Psoas muscle (tissue), 8 donors: ENCODE measurements at regions of chr19 and their contacts with region 1.

Region 1: DNA sequence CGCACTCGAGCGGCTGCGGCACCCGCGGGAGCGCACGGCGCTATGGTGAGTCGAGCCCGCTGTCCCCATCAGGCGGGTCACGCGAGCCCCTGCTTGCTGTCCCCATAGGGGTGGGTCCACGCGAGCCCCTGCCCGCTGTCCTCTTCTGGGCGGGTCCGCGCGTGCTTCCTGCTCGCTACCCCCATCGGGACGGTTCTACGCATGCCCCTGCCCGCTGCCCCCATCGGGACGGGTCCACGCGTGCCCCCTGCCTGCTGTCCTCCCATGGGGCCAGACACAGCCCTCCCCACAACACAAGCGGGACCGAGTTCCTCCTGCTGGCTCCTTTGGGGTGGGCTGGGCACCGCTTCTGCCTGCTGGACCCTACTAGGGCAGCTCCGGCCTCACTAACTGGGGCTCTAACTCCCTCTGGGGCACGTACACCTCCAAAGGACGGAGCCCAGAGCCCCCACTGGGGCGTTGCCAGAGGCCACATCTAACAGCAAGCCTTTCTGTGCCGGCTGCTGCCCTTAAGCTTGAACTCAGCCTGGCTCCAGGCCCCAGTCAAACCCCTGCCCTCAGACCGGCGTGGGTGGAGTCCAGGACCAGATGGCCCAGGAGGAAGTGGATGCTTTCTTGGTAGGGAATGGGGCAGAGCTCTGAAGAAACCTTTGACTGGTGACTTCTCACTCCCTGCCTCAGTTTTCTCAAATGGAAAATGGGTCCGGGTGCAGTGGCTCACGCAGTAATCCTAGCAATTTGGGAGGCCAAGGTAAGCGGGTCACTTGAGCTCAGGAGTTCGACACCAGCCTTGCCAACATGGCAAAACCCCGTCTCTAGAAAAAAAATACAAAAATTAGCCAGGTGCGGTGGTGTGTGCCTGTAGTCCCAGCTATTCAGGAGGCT is 722 bp downstream of the COLGALT1 start:
- DNase-seq: peak; percentile 77 to 80
- ATAC-seq: peak; percentile 22 to 35 (median 26)
- H3K4me3 ChIP-seq: peak overlapping the region; percentile 91
- H3K27ac ChIP-seq: peak overlapping the region; percentile 78
- H3K4me1 ChIP-seq: peaks cover 21% of the 10 kb centered on the region
- H3K27me3 ChIP-seq: no peaks in the 10 kb centered on the region
- CTCF ChIP-seq: no peak

Region 2: GRCh38 chr19:17511724-17512573 is 44.2 kb before region 1 on chr19:
- intact Hi-C with region 1: loop called (anchors 2 to 5 kb)
- DNase-seq: peak; percentile 90 to 96
- ATAC-seq: peak; percentile 82 to 87 (median 84)
- H3K4me3 ChIP-seq: peak overlapping the region; percentile 95
- H3K27ac ChIP-seq: peak overlapping the region; percentile 100
- H3K4me1 ChIP-seq: peaks cover 20% of the 10 kb centered on the region
- H3K27me3 ChIP-seq: no peaks in the 10 kb centered on the region
- CTCF ChIP-seq: peak; percentile 15